ENCODE measurements at regions of chr12 and their contacts with region 1.

Region 1: GRCh38 chr12:46268590-46269558 is at the start of gene SLC38A1:
- DNase-seq: peak; percentile 74
- ATAC-seq: peak; percentile 70
- H3K4me3 ChIP-seq: peak within 1 kb of the TSS; percentile 96
- H3K27ac ChIP-seq: peak within 1 kb of the TSS; percentile 91
- H3K4me1 ChIP-seq: peaks cover 15% of the 10 kb centered on the region
- H3K27me3 ChIP-seq: no peaks in the 10 kb centered on the region
- CTCF ChIP-seq: no peak
- POLR2A ChIP-seq: peak; percentile 63; the same call in 1 of the 2 replicates
- RAD21 ChIP-seq: no peak; the same call in 1 of the 2 replicates
- total RNA-seq, gene SLC38A1: 61.5 and 71.9 TPM in 2 replicates

Region 2: DNA sequence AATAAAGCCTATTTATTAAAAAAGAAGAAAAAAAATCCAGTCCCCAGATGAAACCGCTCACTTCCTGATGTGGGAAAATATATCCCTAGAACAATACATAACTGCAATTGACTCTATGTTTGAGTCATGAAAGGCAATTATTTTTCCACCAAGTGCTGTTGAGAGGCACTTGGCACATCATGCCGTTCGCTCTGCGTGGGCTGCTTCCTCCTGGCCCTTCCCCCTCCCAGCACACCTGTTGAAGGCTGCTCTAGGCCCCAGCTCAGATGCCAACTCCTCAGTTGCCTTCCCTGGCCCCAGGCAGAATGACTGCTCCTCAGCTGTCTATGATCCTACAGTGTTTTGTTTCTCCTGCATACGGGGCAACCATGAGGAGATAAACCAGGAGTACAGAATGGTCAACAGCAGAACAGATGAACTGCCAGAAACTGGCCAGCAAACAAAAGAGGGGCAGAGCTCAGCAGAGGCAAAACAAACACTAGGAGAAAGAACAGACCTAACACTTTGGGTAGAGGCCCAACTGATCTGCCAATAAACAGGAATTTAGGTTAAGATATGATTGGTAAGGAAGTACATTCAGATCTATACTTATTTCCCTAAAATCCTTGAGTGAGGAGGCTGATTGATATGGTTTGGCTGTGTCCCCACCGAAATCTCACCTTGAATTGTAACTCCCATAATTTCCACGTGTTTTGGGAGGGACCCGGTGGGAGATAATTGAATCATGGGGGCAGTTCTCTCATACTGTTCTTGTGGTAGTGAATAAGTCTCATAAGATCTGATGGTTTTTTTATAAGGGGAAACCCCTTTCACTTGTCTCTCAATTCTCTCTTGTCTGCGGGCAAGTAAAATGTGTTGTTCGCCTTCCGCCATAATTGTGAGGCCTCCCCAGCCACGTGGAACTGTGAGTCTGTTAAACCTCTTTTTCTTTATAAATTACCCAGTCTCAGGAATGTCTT is 58.7 kb before region 1 on chr12:
- CTCF ChIA-PET with region 1: no interaction called
- POLR2A ChIA-PET with region 1: no interaction called
- dilution Hi-C with region 1: no loop called
- in situ Hi-C with region 1: loop called (anchors 5 kb)
- intact Hi-C with region 1: loop called (anchors 2 kb)
- DNase-seq: no peak
- ATAC-seq: no peak
- H3K4me3 ChIP-seq: no peak overlapping the region
- H3K27ac ChIP-seq: no peak overlapping the region
- H3K4me1 ChIP-seq: peaks cover 8% of the 10 kb centered on the region
- H3K27me3 ChIP-seq: no peaks in the 10 kb centered on the region
- CTCF ChIP-seq: no peak
- POLR2A ChIP-seq: no peak
- RAD21 ChIP-seq: no peak

Region 3: DNA sequence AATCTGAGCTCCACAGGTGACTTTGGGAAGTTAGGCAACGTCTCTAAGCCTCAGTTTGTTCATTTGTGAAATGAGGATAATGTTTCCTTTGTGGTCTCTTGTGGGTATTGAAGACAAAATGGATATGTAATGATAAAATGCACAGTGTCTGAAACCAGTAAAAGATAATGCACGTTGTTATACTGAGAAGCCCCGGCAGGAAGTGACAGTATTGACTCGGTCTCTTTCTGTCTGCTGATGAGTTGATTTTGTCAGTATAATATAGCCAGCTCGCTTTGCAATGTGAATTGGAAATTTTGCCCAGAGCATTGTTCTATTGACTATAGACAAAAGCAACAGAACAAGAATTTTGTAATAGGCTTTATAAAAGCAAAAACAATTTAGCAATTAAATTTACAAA is 49.2 kb after region 1 on chr12:
- CTCF ChIA-PET with region 1: no interaction called
- POLR2A ChIA-PET with region 1: no interaction called
- dilution Hi-C with region 1: no loop called
- in situ Hi-C with region 1: no loop called
- intact Hi-C with region 1: no loop called
- DNase-seq: no peak
- ATAC-seq: no peak
- H3K4me3 ChIP-seq: no peak overlapping the region
- H3K27ac ChIP-seq: no peak overlapping the region
- H3K4me1 ChIP-seq: no peaks in the 10 kb centered on the region
- H3K27me3 ChIP-seq: no peaks in the 10 kb centered on the region
- CTCF ChIP-seq: no peak
- POLR2A ChIP-seq: no peak
- RAD21 ChIP-seq: no peak

Region 4: GRCh38 chr12:46357438-46358324 is 88.8 kb after region 1 on chr12:
- CTCF ChIA-PET with region 1: interaction called, 4 read pairs
- POLR2A ChIA-PET with region 1: no interaction called
- dilution Hi-C with region 1: no loop called
- in situ Hi-C with region 1: no loop called
- intact Hi-C with region 1: loop called (anchors 2 kb)
- DNase-seq: peak; percentile 93
- ATAC-seq: peak; percentile 53
- H3K4me3 ChIP-seq: no peak overlapping the region
- H3K27ac ChIP-seq: no peak overlapping the region
- H3K4me1 ChIP-seq: peaks cover 2% of the 10 kb centered on the region; the same call in 1 of the 2 replicates
- H3K27me3 ChIP-seq: no peaks in the 10 kb centered on the region
- CTCF ChIP-seq: no peak
- POLR2A ChIP-seq: peak; percentile 78
- RAD21 ChIP-seq: peak; percentile 5; the same call in 1 of the 2 replicates

Region 5: DNA sequence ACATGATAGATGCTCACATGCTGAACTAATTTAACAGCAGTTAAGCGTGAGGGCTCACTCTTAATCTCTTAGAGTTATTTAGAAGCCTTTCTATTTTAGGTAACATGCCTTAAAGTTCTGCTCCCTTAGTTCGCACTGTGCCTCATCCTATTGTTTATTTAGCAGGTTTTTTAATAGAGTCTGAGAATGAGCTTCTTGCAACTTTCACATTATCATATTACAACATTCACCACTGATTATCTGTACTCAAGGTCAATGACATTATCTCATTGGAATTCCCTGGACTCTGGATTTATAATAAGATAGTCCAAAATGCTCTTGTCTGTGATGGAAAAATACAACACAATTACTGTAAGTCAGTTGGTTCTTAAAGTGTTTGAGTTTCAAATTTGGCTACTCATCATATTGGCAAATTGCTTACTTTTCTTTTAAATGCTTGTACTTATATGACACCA is 287.3 kb after region 1 on chr12:
- CTCF ChIA-PET with region 1: interaction called, 3 read pairs
- POLR2A ChIA-PET with region 1: no interaction called
- dilution Hi-C with region 1: no loop called
- in situ Hi-C with region 1: no loop called
- intact Hi-C with region 1: loop called (anchors 2 kb)
- DNase-seq: peak; percentile 99
- ATAC-seq: peak; percentile 73
- H3K4me3 ChIP-seq: peak overlapping the region; percentile 10; the same call in 1 of the 2 replicates
- H3K27ac ChIP-seq: peak overlapping the region; percentile 97; the same call in 1 of the 2 replicates
- H3K4me1 ChIP-seq: peaks cover 15% of the 10 kb centered on the region
- H3K27me3 ChIP-seq: no peaks in the 10 kb centered on the region
- CTCF ChIP-seq: no peak
- POLR2A ChIP-seq: no peak
- RAD21 ChIP-seq: peak; percentile 26; the same call in 1 of the 2 replicates

Measured in IMR-90 (cell line).